Right ventricle myocardium inferior (tissue), 1 donor: ENCODE measurements at regions of chr21 and their contacts with region 1.

Region 1: GRCh38 chr21:39217356-39218081 is 34.3 kb upstream of the PSMG1 start:
- DNase-seq: no peak
- ATAC-seq: no peak

Region 2: DNA sequence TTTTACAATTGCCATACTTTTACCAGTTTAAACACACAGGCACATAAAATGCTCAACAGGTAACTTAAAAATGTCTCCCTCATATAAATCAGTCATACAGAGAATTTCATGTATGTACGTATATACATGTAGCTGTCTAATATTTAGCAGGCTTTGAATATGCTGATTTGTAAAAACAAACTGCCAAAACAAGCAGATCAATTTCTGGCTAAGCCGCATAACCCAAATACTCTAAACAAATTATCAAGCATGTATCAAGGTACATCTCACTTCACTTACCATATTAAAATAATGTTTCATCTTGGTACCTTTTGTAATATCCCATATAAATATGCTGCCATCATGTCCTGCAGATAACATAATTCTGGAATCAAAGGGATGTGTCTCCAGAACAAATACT is 52.1 kb after region 1 on chr21:
- intact Hi-C with region 1: loop called (anchors 10 kb)
- DNase-seq: no peak
- ATAC-seq: no peak

Region 3: GRCh38 chr21:39296891-39297290 is 79.4 kb after region 1 on chr21:
- intact Hi-C with region 1: loop called (anchors 10 kb)
- DNase-seq: no peak
- ATAC-seq: no peak